Natural killer cell (primary cell): ENCODE measurements at regions of chr1 and their contacts with region 1.

Region 1: GRCh38 chr1:44730741-44731512 is at the start of gene RNU5D-1:
- DNase-seq: peak; percentile 91 to 97
- ATAC-seq: peak; percentile 73 to 89 (median 77)
- H3K4me3 ChIP-seq: peak within 1 kb of the TSS; percentile 14
- H3K4me3 Mint-ChIP-seq: peak within 1 kb of the TSS; percentile 80
- H3K27ac ChIP-seq: peak within 1 kb of the TSS; percentile 91
- H3K27ac Mint-ChIP-seq: peak within 1 kb of the TSS; percentile 96
- H3K4me1 ChIP-seq: peaks cover 19% of the 10 kb centered on the region
- H3K4me1 Mint-ChIP-seq: peaks cover 12 to 15% of the 10 kb centered on the region in 2 donors
- H3K27me3 ChIP-seq: no peaks in the 10 kb centered on the region
- H3K27me3 Mint-ChIP-seq: no peaks in the 10 kb centered on the region
- CTCF ChIP-seq: peak; percentile 78
- total RNA-seq, gene RNU5D-1: not detected

Region 2: DNA sequence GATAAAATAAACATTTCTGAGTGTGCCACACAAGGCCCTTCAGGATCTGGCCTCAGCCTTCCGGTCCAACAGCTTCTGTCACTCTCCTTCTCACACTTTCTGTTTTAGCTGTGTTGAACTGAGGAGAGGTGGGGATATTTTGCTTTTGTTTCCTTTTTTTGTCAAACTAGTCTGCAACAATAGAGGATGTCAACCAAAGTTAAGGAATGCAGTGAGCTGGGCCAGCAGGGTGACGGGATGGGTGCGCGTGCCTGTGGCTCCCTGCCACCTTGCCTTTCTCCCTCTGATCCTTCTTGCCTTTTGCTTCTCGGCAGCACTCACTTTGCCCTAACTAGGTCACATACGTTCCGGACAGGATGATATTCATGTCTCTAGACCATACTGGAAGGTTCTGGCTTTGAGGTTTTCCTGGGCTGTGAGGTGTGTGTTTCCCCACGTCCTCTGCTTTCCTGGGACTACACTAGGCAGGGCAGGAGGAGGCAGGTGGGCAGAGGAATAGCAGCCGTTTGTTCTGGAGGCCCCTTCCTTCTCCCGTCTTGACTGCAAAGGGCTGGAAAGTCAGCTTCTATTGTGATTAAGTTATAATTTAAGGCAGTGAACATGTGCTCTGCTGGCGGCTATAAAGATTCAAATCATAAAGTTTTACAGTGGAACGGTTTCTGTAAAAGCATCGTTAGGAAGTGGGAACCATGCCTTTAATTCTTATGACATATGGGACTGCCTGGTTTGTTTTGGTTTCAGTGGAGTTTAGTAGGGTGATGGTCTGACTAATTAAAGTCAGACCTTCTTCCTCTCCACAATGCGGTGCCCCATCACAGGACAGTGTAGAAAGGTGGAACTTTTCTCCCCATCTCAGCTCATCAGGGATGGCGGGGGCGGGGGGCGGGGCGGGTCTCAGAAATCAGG is 258.1 kb before region 1 on chr1:
- intact Hi-C with region 1: no loop called
- DNase-seq: no peak
- ATAC-seq: peak in 2 of 3 donors; percentile 55 to 76
- H3K4me3 ChIP-seq: no peak overlapping the region
- H3K4me3 Mint-ChIP-seq: peak overlapping the region; percentile 71
- H3K27ac ChIP-seq: no peak overlapping the region
- H3K27ac Mint-ChIP-seq: peak overlapping the region; percentile 48 to 75
- H3K4me1 ChIP-seq: peaks cover 9% of the 10 kb centered on the region
- H3K4me1 Mint-ChIP-seq: peaks cover 18% of the 10 kb centered on the region in 2 donors
- H3K27me3 ChIP-seq: no peaks in the 10 kb centered on the region
- H3K27me3 Mint-ChIP-seq: no peaks in the 10 kb centered on the region
- CTCF ChIP-seq: no peak

Region 3: DNA sequence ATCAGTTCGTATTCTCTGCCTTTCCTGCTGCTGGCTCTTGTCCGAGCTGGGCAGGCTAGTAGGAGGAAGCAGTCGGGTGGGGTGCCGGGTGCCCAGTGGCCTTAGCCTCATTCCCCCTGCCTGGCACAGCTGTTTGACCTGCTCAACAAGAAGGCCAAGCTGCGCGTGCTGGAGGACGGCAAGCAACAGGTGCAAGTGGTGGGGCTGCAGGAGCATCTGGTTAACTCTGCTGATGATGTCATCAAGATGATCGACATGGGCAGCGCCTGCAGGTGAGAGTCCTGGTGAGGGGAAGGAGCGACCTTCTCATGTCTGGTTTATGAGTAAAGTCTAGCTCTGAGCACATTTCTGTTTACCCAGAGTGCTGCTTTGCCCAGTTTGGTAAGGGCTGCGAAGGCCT is 28.1 kb after region 1 on chr1:
- intact Hi-C with region 1: no loop called
- DNase-seq: no peak
- ATAC-seq: no peak
- H3K4me3 ChIP-seq: no peak overlapping the region
- H3K4me3 Mint-ChIP-seq: no peak overlapping the region
- H3K27ac ChIP-seq: no peak overlapping the region
- H3K27ac Mint-ChIP-seq: no peak overlapping the region
- H3K4me1 ChIP-seq: peaks cover 8% of the 10 kb centered on the region
- H3K4me1 Mint-ChIP-seq: peaks cover 0 to 8% of the 10 kb centered on the region in 2 donors
- H3K27me3 ChIP-seq: no peaks in the 10 kb centered on the region
- H3K27me3 Mint-ChIP-seq: no peaks in the 10 kb centered on the region
- CTCF ChIP-seq: no peak

Region 4: GRCh38 chr1:44775078-44775929 is 44.4 kb after region 1 on chr1 and contains the start of gene RPS8:
- intact Hi-C with region 1: loop called (anchors 2 kb)
- DNase-seq: peak; percentile 84 to 96
- ATAC-seq: peak; percentile 83 to 89 (median 86)
- H3K4me3 ChIP-seq: peak within 1 kb of the TSS; percentile 65
- H3K4me3 Mint-ChIP-seq: peak within 1 kb of the TSS; percentile 99
- H3K27ac ChIP-seq: peak within 1 kb of the TSS; percentile 85
- H3K27ac Mint-ChIP-seq: peak within 1 kb of the TSS; percentile 92 to 97
- H3K4me1 ChIP-seq: peaks cover 26% of the 10 kb centered on the region
- H3K4me1 Mint-ChIP-seq: peaks cover 30 to 36% of the 10 kb centered on the region in 2 donors
- H3K27me3 ChIP-seq: no peaks in the 10 kb centered on the region
- H3K27me3 Mint-ChIP-seq: no peaks in the 10 kb centered on the region
- CTCF ChIP-seq: no peak
- total RNA-seq, gene RPS8: 848 to 1,092 (median 1,009) TPM

Region 5: GRCh38 chr1:44985747-44986359 is 254.9 kb after region 1 on chr1:
- intact Hi-C with region 1: loop called (anchors 1 kb)
- DNase-seq: no peak
- ATAC-seq: no peak
- H3K4me3 ChIP-seq: peak overlapping the region; percentile 66
- H3K4me3 Mint-ChIP-seq: peak overlapping the region; percentile 99
- H3K27ac ChIP-seq: peak overlapping the region; percentile 5
- H3K27ac Mint-ChIP-seq: peak overlapping the region; percentile 89 to 94
- H3K4me1 ChIP-seq: peaks cover 19% of the 10 kb centered on the region
- H3K4me1 Mint-ChIP-seq: peaks cover 17 to 18% of the 10 kb centered on the region in 2 donors
- H3K27me3 ChIP-seq: no peaks in the 10 kb centered on the region
- H3K27me3 Mint-ChIP-seq: no peaks in the 10 kb centered on the region
- CTCF ChIP-seq: no peak

Region 6: GRCh38 chr1:45303582-45304310 is 572.8 kb after region 1 on chr1:
- intact Hi-C with region 1: loop called (anchors 5 kb)
- DNase-seq: peak; percentile 79 to 98
- ATAC-seq: peak; percentile 84 to 95 (median 87)
- H3K4me3 ChIP-seq: peak overlapping the region; percentile 84
- H3K4me3 Mint-ChIP-seq: peak overlapping the region; percentile 91
- H3K27ac ChIP-seq: peak overlapping the region; percentile 93
- H3K27ac Mint-ChIP-seq: peak overlapping the region; percentile 91 to 93
- H3K4me1 ChIP-seq: peaks cover 17% of the 10 kb centered on the region
- H3K4me1 Mint-ChIP-seq: peaks cover 9 to 12% of the 10 kb centered on the region in 2 donors
- H3K27me3 ChIP-seq: no peaks in the 10 kb centered on the region
- H3K27me3 Mint-ChIP-seq: no peaks in the 10 kb centered on the region
- CTCF ChIP-seq: peak; percentile 70